ENCODE measurements at regions of chr1 and their contacts with region 1.

Region 1: GRCh38 chr1:119516678-119517077 is 9.7 kb downstream of the HSD3B1 start:
- DNase-seq: no peak
- ATAC-seq: no peak
- H3K4me3 ChIP-seq: no peak overlapping the region
- H3K27ac ChIP-seq: no peak overlapping the region
- H3K4me1 ChIP-seq: no peaks in the 10 kb centered on the region
- H3K27me3 ChIP-seq: no peaks in the 10 kb centered on the region
- CTCF ChIP-seq: no peak
- POLR2A ChIP-seq: no peak

Region 2: GRCh38 chr1:119573886-119574285 is 57.2 kb after region 1 on chr1:
- in situ Hi-C with region 1: loop called in 1 of 4 experiments (anchors 10 kb)
- intact Hi-C with region 1: no loop called
- DNase-seq: no peak
- ATAC-seq: no peak
- H3K4me3 ChIP-seq: no peak overlapping the region
- H3K27ac ChIP-seq: no peak overlapping the region
- H3K4me1 ChIP-seq: no peaks in the 10 kb centered on the region
- H3K27me3 ChIP-seq: no peaks in the 10 kb centered on the region
- CTCF ChIP-seq: no peak
- POLR2A ChIP-seq: no peak

Measured in gastrocnemius medialis (tissue), 4 donors.